Activated CD8-positive, alpha-beta memory T cell treated with anti-CD3 and anti-CD28 coated beads, Interleukin-2, amount 10 ng/mL, durations not matched to agents 7 days and 5 days (primary cell): ENCODE measurements at regions of chr19 and their contacts with region 1.

Region 1: GRCh38 chr19:42132851-42133528 is 744 bp upstream of the POU2F2 start:
- DNase-seq: peak; percentile 82
- ATAC-seq: peak; percentile 73
- H3K4me3 Mint-ChIP-seq: peak overlapping the region; percentile 70
- H3K27ac Mint-ChIP-seq: peak overlapping the region; percentile 77
- H3K4me1 Mint-ChIP-seq: peaks cover 46% of the 10 kb centered on the region
- H3K27me3 Mint-ChIP-seq: no peaks in the 10 kb centered on the region

Region 2: GRCh38 chr19:41928221-41928683 is 204.7 kb before region 1 on chr19 and contains the start of gene ERFL:
- CTCF ChIA-PET with region 1: no interaction called
- DNase-seq: no peak
- ATAC-seq: peak; percentile 55
- H3K4me3 Mint-ChIP-seq: peak within 1 kb of the TSS; percentile 85
- H3K27ac Mint-ChIP-seq: peak within 1 kb of the TSS; percentile 61
- H3K4me1 Mint-ChIP-seq: peaks cover 14% of the 10 kb centered on the region
- H3K27me3 Mint-ChIP-seq: peaks cover 29% of the 10 kb centered on the region
- total RNA-seq, gene ERFL: 1.5 to 1.9 TPM

Region 3: GRCh38 chr19:41993612-41994483 is 139.1 kb before region 1 on chr19 and contains the start of gene ATP1A3:
- CTCF ChIA-PET with region 1: no interaction called
- DNase-seq: peak; percentile 72
- ATAC-seq: peak; percentile 87
- H3K4me3 Mint-ChIP-seq: peak within 1 kb of the TSS; percentile 76
- H3K27ac Mint-ChIP-seq: no peak within 1 kb of the TSS
- H3K4me1 Mint-ChIP-seq: peaks cover 20% of the 10 kb centered on the region
- H3K27me3 Mint-ChIP-seq: peaks cover 41% of the 10 kb centered on the region
- total RNA-seq, gene ATP1A3: 3.4 to 5.6 TPM

Region 4: GRCh38 chr19:42121656-42122069 is 11.3 kb before region 1 on chr19:
- CTCF ChIA-PET with region 1: interaction called, 34 read pairs
- DNase-seq: peak; percentile 82
- ATAC-seq: peak; percentile 62
- H3K4me3 Mint-ChIP-seq: peak overlapping the region; percentile 61
- H3K27ac Mint-ChIP-seq: peak overlapping the region; percentile 91
- H3K4me1 Mint-ChIP-seq: peaks cover 46% of the 10 kb centered on the region
- H3K27me3 Mint-ChIP-seq: no peaks in the 10 kb centered on the region

Region 5: GRCh38 chr19:42184401-42184861 is 51.4 kb after region 1 on chr19:
- CTCF ChIA-PET with region 1: interaction called, 79 read pairs
- DNase-seq: peak; percentile 81
- ATAC-seq: peak; percentile 78
- H3K4me3 Mint-ChIP-seq: peak overlapping the region; percentile 5
- H3K27ac Mint-ChIP-seq: peak overlapping the region; percentile 87
- H3K4me1 Mint-ChIP-seq: peaks cover 39% of the 10 kb centered on the region
- H3K27me3 Mint-ChIP-seq: peaks cover 8% of the 10 kb centered on the region

Region 6: DNA sequence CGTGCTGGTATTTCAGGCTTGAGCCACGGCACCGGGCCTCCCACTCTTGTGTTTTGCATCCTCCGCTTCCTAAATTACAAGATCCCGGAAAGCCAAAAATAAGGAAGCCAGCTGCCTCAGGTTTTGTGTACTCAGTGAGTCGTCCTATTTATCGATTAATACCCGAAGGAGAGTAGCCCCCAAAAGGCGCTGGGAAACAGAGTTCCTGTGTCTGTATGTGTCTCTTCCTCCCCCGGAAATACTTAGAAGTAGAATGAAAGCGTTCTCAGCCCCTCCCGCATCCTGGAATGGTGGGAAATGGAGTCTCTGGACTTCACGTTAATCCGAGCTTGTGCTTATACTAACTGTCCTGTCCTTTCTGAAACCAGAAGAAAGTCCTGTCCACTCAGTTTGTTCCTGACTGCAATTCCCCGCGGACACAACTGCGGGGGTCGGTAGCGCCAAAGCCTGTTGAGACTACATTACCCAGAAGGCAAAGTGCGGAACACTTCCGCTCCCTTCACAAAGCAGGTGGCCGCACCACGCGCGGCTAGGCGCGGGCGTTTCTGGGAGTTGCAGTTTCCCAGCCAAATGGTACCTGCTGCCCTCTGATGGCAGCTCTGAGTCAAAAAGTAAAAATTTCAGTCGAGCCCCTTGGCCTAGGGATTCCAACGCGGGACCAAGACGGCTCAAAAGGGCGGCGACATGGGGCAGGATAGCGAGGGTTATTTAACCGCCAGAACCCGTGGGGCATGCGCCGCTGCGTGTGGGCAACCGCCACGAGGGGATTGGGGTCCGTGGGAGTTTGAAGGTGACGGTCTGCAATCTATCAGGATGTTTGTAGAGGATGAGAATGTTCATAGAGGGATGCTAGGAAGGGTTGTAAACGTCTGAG is 111.6 kb after region 1 on chr19:
- CTCF ChIA-PET with region 1: interaction called, 17 read pairs
- DNase-seq: peak; percentile 97
- ATAC-seq: peak; percentile 56
- H3K4me3 Mint-ChIP-seq: peak overlapping the region; percentile 90
- H3K27ac Mint-ChIP-seq: peak overlapping the region; percentile 95
- H3K4me1 Mint-ChIP-seq: peaks cover 30% of the 10 kb centered on the region
- H3K27me3 Mint-ChIP-seq: no peaks in the 10 kb centered on the region